Tibial artery (tissue), 4 donors: ENCODE measurements at regions of chr4 and their contacts with region 1.

Region 1: GRCh38 chr4:3532714-3533336 is 603 bp upstream of the LRPAP1 start:
- DNase-seq: peak in 1 of 2 donors; percentile 64
- H3K4me3 ChIP-seq: peak overlapping the region; percentile 83 to 87
- H3K27ac ChIP-seq: peak overlapping the region; percentile 70 to 79
- H3K4me1 ChIP-seq: peaks cover 0 to 29% (median 25%) of the 10 kb centered on the region in 4 donors
- H3K27me3 ChIP-seq: no peaks in the 10 kb centered on the region
- CTCF ChIP-seq: no peak

Region 2: DNA sequence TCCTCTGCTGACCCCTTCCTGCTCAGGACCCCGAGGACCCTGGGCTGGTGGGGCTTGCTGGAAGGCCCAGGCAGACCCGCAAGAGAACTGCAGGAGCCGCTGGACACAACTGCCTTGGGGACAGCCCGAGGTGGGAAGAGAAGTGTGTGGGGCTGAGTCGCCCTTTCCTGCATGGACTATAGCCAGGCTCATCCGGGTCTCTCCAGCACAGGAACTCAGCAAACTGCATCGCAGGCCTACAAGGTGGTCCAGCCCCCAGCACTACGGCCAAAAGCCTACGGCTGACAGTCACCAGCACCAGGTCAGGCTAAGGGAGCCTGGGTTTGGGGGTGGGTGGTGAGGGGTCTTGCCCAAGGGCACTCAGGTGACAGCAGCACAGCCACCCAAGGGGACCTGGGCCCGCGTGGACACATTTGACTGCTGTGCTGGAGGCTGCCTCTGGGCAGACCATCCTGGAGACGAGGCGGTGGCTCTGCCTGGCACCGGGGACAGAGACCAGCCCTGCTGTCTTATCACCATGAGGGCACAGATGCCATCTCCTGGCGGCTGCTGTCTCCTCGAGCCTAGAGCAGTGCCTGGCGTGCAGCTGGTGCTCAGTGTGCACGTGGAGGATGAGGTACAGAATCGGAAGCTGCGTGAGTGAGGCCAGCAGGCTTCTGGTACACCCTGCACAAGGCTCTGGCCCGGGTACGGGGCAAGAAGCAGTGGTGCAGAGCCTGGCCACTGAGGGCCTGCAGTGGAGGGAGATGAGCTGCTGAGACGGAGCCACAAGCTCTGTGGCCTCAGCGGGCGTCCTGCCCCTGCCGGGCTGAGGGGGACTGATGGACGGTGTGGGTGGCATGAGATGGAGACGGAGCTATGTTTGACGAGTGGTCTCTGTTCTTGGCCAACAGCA is 15.7 kb before region 1 on chr4:
- intact Hi-C with region 1: loop called (anchors 1 kb)
- DNase-seq: peak in 1 of 2 donors; percentile 61
- H3K4me3 ChIP-seq: no peak overlapping the region
- H3K27ac ChIP-seq: no peak overlapping the region
- H3K4me1 ChIP-seq: no peaks in the 10 kb centered on the region
- H3K27me3 ChIP-seq: no peaks in the 10 kb centered on the region
- CTCF ChIP-seq: no peak